ENCODE measurements at regions of chr16 and their contacts with region 1.

Region 1: DNA sequence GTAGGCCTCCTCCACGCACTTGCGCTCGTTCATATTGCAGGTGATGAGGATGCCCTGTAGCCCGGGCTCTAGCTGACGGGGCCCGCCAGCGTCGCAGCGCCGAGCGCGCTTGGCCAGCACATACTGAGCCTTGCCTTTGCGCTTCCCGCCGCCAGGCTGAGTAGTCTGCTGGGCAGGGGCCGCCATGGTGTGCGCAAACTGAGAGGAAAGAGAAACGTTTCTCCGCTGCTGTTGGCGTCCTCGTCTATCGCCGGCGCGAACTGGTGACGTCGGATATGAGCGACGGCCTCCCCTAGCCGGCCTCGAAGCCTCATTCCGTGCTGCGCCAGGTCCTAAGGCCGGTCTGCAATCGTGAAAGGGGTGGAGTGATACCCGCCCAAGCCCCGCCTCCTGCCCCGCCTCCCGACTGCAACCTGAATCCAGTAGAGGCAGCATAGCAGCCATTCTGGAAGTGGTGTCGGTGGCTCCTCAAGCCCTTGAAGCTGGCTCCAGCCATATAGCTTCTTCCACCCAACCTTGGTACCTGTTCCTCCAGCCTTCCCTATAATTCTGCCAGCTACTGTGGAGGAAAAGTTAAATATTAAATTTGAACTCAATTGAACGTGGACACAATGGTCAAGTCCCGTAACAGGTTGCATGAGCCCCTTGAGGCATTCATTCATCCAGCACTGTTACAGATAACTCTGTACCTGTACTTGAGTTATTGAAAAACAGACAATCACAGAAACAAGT is at the start of gene THUMPD1:
- DNase-seq: peak; percentile 91 to 98 (median 96)
- H3K4me3 ChIP-seq: peak within 1 kb of the TSS; percentile 76 to 90
- H3K4me3 Mint-ChIP-seq: peak within 1 kb of the TSS; percentile 95 to 98 (median 96)
- H3K27ac ChIP-seq: peak within 1 kb of the TSS; percentile 98
- H3K27ac Mint-ChIP-seq: peak within 1 kb of the TSS; percentile 98 to 99 (median 99)
- H3K4me1 ChIP-seq: peaks cover 34% of the 10 kb centered on the region
- H3K4me1 Mint-ChIP-seq: peaks cover 15 to 33% (median 23%) of the 10 kb centered on the region in 4 donors
- H3K27me3 ChIP-seq: no peaks in the 10 kb centered on the region
- H3K27me3 Mint-ChIP-seq: no peaks in the 10 kb centered on the region
- total RNA-seq, gene THUMPD1: 73.2 to 74.4 TPM

Region 2: GRCh38 chr16:18932243-18932981 is 1809.3 kb before region 1 on chr16:
- CTCF ChIA-PET with region 1: no interaction called
- POLR2A ChIA-PET with region 1: no interaction called
- intact Hi-C with region 1: loop called (anchors 5 kb)
- DNase-seq: no peak
- H3K4me3 ChIP-seq: no peak overlapping the region
- H3K4me3 Mint-ChIP-seq: no peak overlapping the region
- H3K27ac ChIP-seq: no peak overlapping the region
- H3K27ac Mint-ChIP-seq: no peak overlapping the region
- H3K4me1 ChIP-seq: no peaks in the 10 kb centered on the region
- H3K4me1 Mint-ChIP-seq: peaks cover 0 to 4% (median 0%) of the 10 kb centered on the region in 4 donors
- H3K27me3 ChIP-seq: no peaks in the 10 kb centered on the region
- H3K27me3 Mint-ChIP-seq: peaks cover 0 to under 1% of the 10 kb centered on the region in 2 donors

Region 3: GRCh38 chr16:20675488-20676267 is 66.0 kb before region 1 on chr16:
- CTCF ChIA-PET with region 1: no interaction called
- POLR2A ChIA-PET with region 1: interaction called, 12 read pairs
- intact Hi-C with region 1: loop called (anchors 5 kb)
- DNase-seq: peak in 4 of 5 donors; percentile 19 to 34 (median 26)
- H3K4me3 ChIP-seq: peak overlapping the region; percentile 34 to 42
- H3K4me3 Mint-ChIP-seq: peak overlapping the region; percentile 81 to 91 (median 88)
- H3K27ac ChIP-seq: peak overlapping the region; percentile 39
- H3K27ac Mint-ChIP-seq: peak overlapping the region; percentile 66 to 95 (median 88)
- H3K4me1 ChIP-seq: peaks cover 29% of the 10 kb centered on the region
- H3K4me1 Mint-ChIP-seq: peaks cover 23 to 40% (median 28%) of the 10 kb centered on the region in 4 donors
- H3K27me3 ChIP-seq: no peaks in the 10 kb centered on the region
- H3K27me3 Mint-ChIP-seq: no peaks in the 10 kb centered on the region

Region 4: GRCh38 chr16:20753727-20754126 is 12.0 kb after region 1 on chr16:
- CTCF ChIA-PET with region 1: no interaction called
- POLR2A ChIA-PET with region 1: no interaction called
- intact Hi-C with region 1: no loop called
- DNase-seq: no peak
- H3K4me3 ChIP-seq: no peak overlapping the region
- H3K4me3 Mint-ChIP-seq: no peak overlapping the region
- H3K27ac ChIP-seq: no peak overlapping the region
- H3K27ac Mint-ChIP-seq: no peak overlapping the region
- H3K4me1 ChIP-seq: no peaks in the 10 kb centered on the region
- H3K4me1 Mint-ChIP-seq: no peaks in the 10 kb centered on the region
- H3K27me3 ChIP-seq: no peaks in the 10 kb centered on the region
- H3K27me3 Mint-ChIP-seq: peaks cover 0 to 6% of the 10 kb centered on the region in 2 donors

Region 5: DNA sequence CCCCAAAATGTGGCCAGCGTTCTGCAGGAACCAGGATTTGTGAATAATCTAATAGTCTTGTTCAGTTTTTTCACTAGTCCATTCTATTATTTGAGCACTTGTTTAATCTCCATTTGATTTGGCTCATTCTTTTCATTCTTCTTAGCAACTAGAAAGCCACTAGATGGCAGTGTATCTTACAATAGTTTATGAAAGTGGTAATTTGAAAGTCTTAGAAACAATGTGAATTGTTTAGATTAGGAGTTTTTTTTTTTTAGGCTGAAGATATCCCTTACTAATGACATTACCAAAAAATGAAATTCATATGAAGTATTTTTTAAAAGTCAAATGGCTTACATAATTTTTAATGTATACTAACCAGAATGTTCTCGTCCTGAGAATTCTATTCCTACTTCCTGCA is 57.9 kb after region 1 on chr16:
- CTCF ChIA-PET with region 1: no interaction called
- POLR2A ChIA-PET with region 1: no interaction called
- intact Hi-C with region 1: loop called (anchors 2 kb)
- DNase-seq: peak in 4 of 5 donors; percentile 5 to 45 (median 14)
- H3K4me3 ChIP-seq: no peak overlapping the region
- H3K4me3 Mint-ChIP-seq: peak overlapping the region in 1 of 8 donors; percentile 17
- H3K27ac ChIP-seq: no peak overlapping the region
- H3K27ac Mint-ChIP-seq: peak overlapping the region in 1 of 7 donors; percentile 17
- H3K4me1 ChIP-seq: peaks cover 17% of the 10 kb centered on the region
- H3K4me1 Mint-ChIP-seq: peaks cover 15 to 22% (median 17%) of the 10 kb centered on the region in 4 donors
- H3K27me3 ChIP-seq: no peaks in the 10 kb centered on the region
- H3K27me3 Mint-ChIP-seq: no peaks in the 10 kb centered on the region

Region 6: GRCh38 chr16:20900299-20901067 is 158.8 kb after region 1 on chr16 and contains the starts of genes DCUN1D3 and LYRM1:
- CTCF ChIA-PET with region 1: no interaction called
- POLR2A ChIA-PET with region 1: interaction called, 8 read pairs
- intact Hi-C with region 1: loop called (anchors 1 kb)
- DNase-seq: peak; percentile 81 to 92 (median 85)
- H3K4me3 ChIP-seq: peak within 1 kb of the TSS; percentile 70 to 91
- H3K4me3 Mint-ChIP-seq: peak within 1 kb of the TSS; percentile 93 to 99 (median 94)
- H3K27ac ChIP-seq: peak within 1 kb of the TSS; percentile 88
- H3K27ac Mint-ChIP-seq: peak within 1 kb of the TSS; percentile 94 to 99 (median 97)
- H3K4me1 ChIP-seq: peaks cover 57% of the 10 kb centered on the region
- H3K4me1 Mint-ChIP-seq: peaks cover 48 to 76% (median 60%) of the 10 kb centered on the region in 4 donors
- H3K27me3 ChIP-seq: no peaks in the 10 kb centered on the region
- H3K27me3 Mint-ChIP-seq: no peaks in the 10 kb centered on the region
- total RNA-seq, gene DCUN1D3: 6.2 to 7.5 TPM
- total RNA-seq, gene LYRM1: 25.8 to 27.4 TPM